OCI-LY7 (cell line): ENCODE measurements at regions of chr6 and their contacts with region 1.

Region 1: GRCh38 chr6:7615611-7616383 is 25.8 kb downstream of the SNRNP48 start:
- DNase-seq: peak; percentile 66
- H3K4me3 ChIP-seq: no peak overlapping the region
- H3K27ac ChIP-seq: no peak overlapping the region
- H3K4me1 ChIP-seq: no peaks in the 10 kb centered on the region
- CTCF ChIP-seq: peak; percentile 86

Region 2: GRCh38 chr6:7276199-7276524 is 339.6 kb before region 1 on chr6:
- CTCF ChIA-PET with region 1: no interaction called
- POLR2A ChIA-PET with region 1: interaction called, 5 read pairs
- intact Hi-C with region 1: loop called (anchors 1 kb)
- DNase-seq: no peak
- H3K4me3 ChIP-seq: no peak overlapping the region
- H3K27ac ChIP-seq: no peak overlapping the region
- H3K4me1 ChIP-seq: peaks cover 26% of the 10 kb centered on the region
- CTCF ChIP-seq: 0 out of 2 replicates have a peak, but pooled peaks have one; percentile 1

Region 3: DNA sequence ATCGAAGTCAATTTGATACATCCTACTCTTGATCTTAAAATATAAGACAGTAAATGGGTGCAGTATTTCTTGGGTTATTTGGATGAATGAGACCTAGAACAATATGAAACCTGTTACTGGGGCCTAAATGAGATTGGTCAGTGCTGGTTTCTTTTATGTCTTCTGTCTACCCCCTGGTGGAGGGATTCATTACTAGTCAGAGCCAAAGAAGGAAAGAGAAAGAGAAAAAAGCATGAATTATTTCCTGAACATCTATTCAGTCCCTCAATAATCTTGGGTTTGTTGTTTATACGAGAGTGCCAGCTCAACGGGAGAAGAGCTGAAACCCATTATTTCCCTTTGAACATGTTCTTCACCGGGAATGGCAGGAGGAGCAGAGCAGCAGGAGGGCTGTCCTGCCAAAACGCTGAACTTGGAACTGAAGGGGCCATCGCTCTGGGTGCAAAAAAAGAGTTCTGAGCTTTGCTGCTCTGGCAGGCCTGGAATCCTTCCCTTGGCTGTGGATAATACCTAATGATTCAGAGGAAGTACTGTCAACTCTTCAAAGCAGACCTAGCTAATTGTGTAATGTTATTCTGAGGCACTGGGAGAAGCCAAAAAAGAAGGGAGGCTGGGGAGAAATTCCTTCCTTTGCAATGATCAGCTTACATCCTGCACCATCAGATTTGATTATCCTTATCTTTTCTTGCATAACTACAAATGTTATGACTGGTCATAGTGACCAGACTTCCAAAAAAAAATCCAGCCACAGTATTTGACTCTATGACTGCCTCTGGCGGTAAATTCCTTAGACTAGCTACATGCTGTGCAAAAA is 376.4 kb after region 1 on chr6:
- CTCF ChIA-PET with region 1: no interaction called
- POLR2A ChIA-PET with region 1: interaction called, 5 read pairs
- intact Hi-C with region 1: loop called (anchors 10 kb)
- DNase-seq: peak; percentile 76
- H3K4me3 ChIP-seq: no peak overlapping the region
- H3K27ac ChIP-seq: no peak overlapping the region
- H3K4me1 ChIP-seq: peaks cover 10% of the 10 kb centered on the region
- CTCF ChIP-seq: peak; percentile 89